ENCODE measurements at regions of chr1 and their contacts with region 1.

Region 1: GRCh38 chr1:185317034-185317885 is at the start of gene IVNS1ABP:
- DNase-seq: peak; percentile 94
- ATAC-seq: peak; percentile 82
- H3K4me3 Mint-ChIP-seq: peak within 1 kb of the TSS; percentile 96
- H3K27ac Mint-ChIP-seq: peak within 1 kb of the TSS; percentile 96
- H3K4me1 Mint-ChIP-seq: peaks cover 43% of the 10 kb centered on the region
- H3K27me3 Mint-ChIP-seq: no peaks in the 10 kb centered on the region
- total RNA-seq, gene IVNS1ABP: 261 to 265 TPM

Region 2: DNA sequence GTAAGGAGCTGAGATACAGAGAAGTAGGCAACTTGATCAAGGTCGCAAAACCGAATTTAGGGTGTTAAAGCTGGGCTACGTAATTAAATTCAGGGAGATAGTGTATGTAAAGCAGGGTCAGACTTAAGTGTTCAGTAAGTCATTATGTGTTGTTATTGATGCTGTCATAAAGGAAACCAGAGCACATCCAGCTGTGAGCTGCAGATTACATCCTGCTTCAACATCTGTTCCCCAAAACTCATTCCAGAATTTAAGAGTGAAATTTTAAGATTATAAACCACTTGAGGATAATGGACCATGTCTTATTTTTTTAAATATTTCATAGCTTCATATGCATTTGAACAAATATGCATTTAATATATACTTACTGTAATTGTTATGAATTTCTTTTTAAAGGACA is 50.0 kb before region 1 on chr1:
- POLR2A ChIA-PET with region 1: no interaction called
- DNase-seq: no peak
- ATAC-seq: no peak
- H3K4me3 Mint-ChIP-seq: no peak overlapping the region
- H3K27ac Mint-ChIP-seq: no peak overlapping the region
- H3K4me1 Mint-ChIP-seq: peaks cover under 1% of the 10 kb centered on the region
- H3K27me3 Mint-ChIP-seq: no peaks in the 10 kb centered on the region

Region 3: DNA sequence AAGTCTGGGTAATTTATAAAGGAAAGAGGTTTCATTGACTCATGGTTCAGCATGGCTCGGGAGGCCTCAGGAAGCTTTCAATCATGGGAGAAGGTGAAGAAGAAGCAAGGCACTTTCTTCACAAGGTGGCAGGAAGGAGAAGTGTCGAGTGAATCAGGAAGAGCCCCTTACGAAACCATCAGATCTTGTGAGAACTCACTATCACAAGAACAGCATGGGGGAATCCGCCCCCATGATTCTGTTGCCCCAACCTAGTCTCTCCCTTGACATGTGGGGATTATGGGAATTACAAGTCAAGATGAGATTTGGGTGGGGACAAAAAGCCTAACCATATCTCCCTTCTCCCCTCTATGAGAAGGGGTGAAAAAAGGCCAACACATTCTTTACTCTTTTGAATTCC is 11.0 kb after region 1 on chr1:
- POLR2A ChIA-PET with region 1: no interaction called
- DNase-seq: no peak
- ATAC-seq: no peak
- H3K4me3 Mint-ChIP-seq: no peak overlapping the region
- H3K27ac Mint-ChIP-seq: no peak overlapping the region
- H3K4me1 Mint-ChIP-seq: peaks cover 11% of the 10 kb centered on the region
- H3K27me3 Mint-ChIP-seq: no peaks in the 10 kb centered on the region

Region 4: GRCh38 chr1:185338719-185339622 is 21.7 kb after region 1 on chr1:
- POLR2A ChIA-PET with region 1: interaction called, 67 read pairs
- DNase-seq: peak; percentile 77
- ATAC-seq: peak; percentile 95
- H3K4me3 Mint-ChIP-seq: peak overlapping the region; percentile 66
- H3K27ac Mint-ChIP-seq: peak overlapping the region; percentile 95
- H3K4me1 Mint-ChIP-seq: peaks cover 46% of the 10 kb centered on the region
- H3K27me3 Mint-ChIP-seq: no peaks in the 10 kb centered on the region

Region 5: GRCh38 chr1:185426848-185427247 is 109.6 kb after region 1 on chr1:
- POLR2A ChIA-PET with region 1: interaction called, 105 read pairs
- DNase-seq: no peak
- ATAC-seq: no peak
- H3K4me3 Mint-ChIP-seq: no peak overlapping the region
- H3K27ac Mint-ChIP-seq: no peak overlapping the region
- H3K4me1 Mint-ChIP-seq: peaks cover 62% of the 10 kb centered on the region
- H3K27me3 Mint-ChIP-seq: no peaks in the 10 kb centered on the region

Region 6: GRCh38 chr1:185566995-185567394 is 249.7 kb after region 1 on chr1:
- POLR2A ChIA-PET with region 1: interaction called, 97 read pairs
- DNase-seq: no peak
- ATAC-seq: peak; percentile 64
- H3K4me3 Mint-ChIP-seq: peak overlapping the region; percentile 73
- H3K27ac Mint-ChIP-seq: peak overlapping the region; percentile 87
- H3K4me1 Mint-ChIP-seq: peaks cover 44% of the 10 kb centered on the region
- H3K27me3 Mint-ChIP-seq: no peaks in the 10 kb centered on the region

Region 7: GRCh38 chr1:185670187-185670627 is 352.9 kb after region 1 on chr1:
- POLR2A ChIA-PET with region 1: interaction called, 32 read pairs
- DNase-seq: no peak
- ATAC-seq: peak; percentile 80
- H3K4me3 Mint-ChIP-seq: no peak overlapping the region
- H3K27ac Mint-ChIP-seq: peak overlapping the region; percentile 30
- H3K4me1 Mint-ChIP-seq: peaks cover 44% of the 10 kb centered on the region
- H3K27me3 Mint-ChIP-seq: no peaks in the 10 kb centered on the region

Measured in activated naive CD8-positive, alpha-beta T cell treated with anti-CD3 and anti-CD28 coated beads, Interleukin-2, amount 10 ng/mL, durations not matched to agents 7 days and 5 days (primary cell).